Ovary (tissue), 10 donors: ENCODE measurements at regions of chr1 and their contacts with region 1.

Region 1: GRCh38 chr1:43073490-43074230 is 98.4 kb downstream of the EBNA1BP2 start:
- DNase-seq: peak; percentile 61 to 80 (median 71)
- H3K4me3 ChIP-seq: no peak overlapping the region
- H3K27ac ChIP-seq: no peak overlapping the region
- H3K4me1 ChIP-seq: peaks cover 2% of the 10 kb centered on the region
- H3K27me3 ChIP-seq: no peaks in the 10 kb centered on the region
- CTCF ChIP-seq: peak; percentile 67 to 91 (median 87)
- EP300 ChIP-seq: no peak
- POLR2A ChIP-seq: no peak

Region 2: DNA sequence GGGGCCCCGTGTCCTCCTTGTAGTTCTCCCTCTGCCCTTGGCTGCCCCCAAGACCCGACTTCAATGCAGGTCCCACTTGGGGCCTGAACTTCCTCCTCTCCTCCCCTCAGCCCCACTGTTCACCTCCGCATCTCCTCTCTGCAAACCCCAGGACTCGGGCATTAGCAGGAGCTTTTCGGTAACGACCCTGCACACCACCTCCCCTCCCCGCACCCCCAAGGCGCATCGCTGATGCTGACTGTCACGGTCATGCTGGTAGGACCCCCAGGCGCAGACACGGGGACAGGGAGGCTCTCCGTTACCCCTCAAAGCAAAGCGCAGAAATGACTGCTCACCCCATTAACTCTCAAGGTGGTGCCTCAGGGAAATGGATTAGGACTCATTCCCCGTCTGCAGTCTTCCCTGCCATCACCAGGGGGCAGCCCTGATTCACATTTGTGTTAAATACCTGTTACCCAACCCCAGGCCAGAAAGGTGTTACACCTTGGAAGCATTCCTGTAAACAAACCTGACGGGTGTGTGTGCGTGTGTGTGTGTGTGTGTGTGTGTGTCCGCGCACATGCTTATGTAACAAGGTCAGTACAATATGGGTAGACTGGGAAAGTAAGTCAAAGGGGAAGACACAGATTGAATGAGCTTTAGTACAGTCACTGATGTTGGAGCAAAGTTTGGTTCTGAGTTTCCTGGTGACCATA is 926.9 kb before region 1 on chr1:
- intact Hi-C with region 1: loop called in 1 of 4 experiments (anchors 10 kb)
- DNase-seq: peak; percentile 31 to 74 (median 66)
- H3K4me3 ChIP-seq: no peak overlapping the region
- H3K27ac ChIP-seq: no peak overlapping the region
- H3K4me1 ChIP-seq: no peaks in the 10 kb centered on the region
- H3K27me3 ChIP-seq: no peaks in the 10 kb centered on the region
- CTCF ChIP-seq: peak in 2 of 3 donors; percentile 59 to 67
- EP300 ChIP-seq: no peak
- POLR2A ChIP-seq: no peak

Region 3: GRCh38 chr1:42576935-42577334 is 496.7 kb before region 1 on chr1:
- intact Hi-C with region 1: loop called in 1 of 4 experiments (anchors 5 kb)
- DNase-seq: no peak
- H3K4me3 ChIP-seq: no peak overlapping the region
- H3K27ac ChIP-seq: no peak overlapping the region
- H3K4me1 ChIP-seq: no peaks in the 10 kb centered on the region
- H3K27me3 ChIP-seq: no peaks in the 10 kb centered on the region
- CTCF ChIP-seq: no peak
- EP300 ChIP-seq: no peak
- POLR2A ChIP-seq: no peak

Region 4: DNA sequence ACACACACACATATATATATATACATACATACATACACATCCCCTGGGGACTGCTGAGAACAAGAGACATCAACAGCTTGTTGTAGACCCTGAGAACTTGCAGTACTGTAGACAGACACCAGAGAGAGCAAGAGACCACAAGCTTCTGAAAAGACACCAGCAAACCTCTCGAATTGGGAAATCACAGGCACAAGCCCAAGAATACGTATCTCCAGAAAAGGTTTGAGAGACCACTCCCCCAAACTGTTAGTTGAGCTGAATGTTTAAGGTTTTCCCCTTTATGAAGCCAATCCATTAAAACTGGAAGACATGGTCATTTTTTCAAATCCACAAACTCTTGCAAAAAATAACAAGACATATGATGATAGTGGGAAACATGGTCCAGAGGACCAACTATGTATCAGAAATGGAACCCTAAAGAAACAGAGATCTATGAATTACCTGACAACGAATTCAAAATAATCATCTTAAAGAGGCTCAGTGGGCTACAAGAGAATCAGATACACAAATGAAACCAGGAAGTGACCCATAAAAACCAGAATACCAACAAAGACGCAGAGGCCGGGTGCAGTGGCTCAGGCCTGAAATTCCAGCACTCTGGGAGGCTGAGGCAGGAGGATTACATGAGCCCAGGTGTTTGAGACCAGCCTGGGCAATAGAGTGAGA is 160.1 kb before region 1 on chr1:
- intact Hi-C with region 1: loop called in 2 of 4 experiments (anchors 5 kb)
- DNase-seq: peak in 1 of 5 donors; percentile 62
- H3K4me3 ChIP-seq: no peak overlapping the region
- H3K27ac ChIP-seq: no peak overlapping the region
- H3K4me1 ChIP-seq: no peaks in the 10 kb centered on the region
- H3K27me3 ChIP-seq: no peaks in the 10 kb centered on the region
- CTCF ChIP-seq: peak in 2 of 3 donors; percentile 47 to 54
- EP300 ChIP-seq: no peak
- POLR2A ChIP-seq: no peak

Region 5: DNA sequence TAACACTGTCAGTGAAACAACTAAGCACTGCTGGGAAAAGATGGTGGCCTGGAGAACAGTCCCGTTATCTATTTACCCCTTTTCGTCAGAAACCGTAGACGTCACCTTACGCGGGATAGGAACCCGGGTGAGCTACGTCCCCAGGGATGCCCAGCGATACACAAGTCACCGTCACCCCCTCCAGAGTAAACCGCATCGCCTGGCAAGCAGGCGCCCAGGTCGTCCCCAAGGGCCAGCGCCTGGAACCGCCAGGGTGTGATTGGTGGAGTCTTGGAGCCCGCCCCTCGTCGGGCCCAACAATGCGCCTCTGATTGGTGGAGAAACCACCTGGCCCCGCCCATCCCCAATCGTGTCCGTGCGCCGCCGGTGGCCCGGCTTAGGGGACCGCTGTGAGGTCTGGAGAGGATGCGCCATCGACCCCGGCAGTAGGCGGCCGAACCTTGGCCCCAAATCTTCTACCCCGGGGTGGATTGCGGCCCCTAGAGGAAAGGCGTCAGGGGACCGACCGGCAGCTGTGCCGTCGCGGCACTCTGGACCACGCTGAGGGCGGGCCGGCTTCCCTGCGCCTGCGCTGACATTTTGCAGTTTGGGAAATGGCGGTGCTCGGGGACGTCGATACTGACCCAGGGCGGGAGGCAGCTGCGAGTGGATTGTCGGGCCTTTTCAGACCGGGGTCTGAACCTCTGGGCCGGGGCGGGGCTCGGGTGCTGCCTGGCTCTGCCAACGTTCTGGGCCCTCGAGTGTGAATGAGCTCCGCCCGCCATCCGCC is 149.4 kb before region 1 on chr1:
- intact Hi-C with region 1: loop called in 2 of 4 experiments (anchors 5 kb)
- DNase-seq: peak; percentile 93 to 95 (median 94)
- H3K4me3 ChIP-seq: peak overlapping the region; percentile 63
- H3K27ac ChIP-seq: peak overlapping the region; percentile 77 to 80
- H3K4me1 ChIP-seq: peaks cover 2% of the 10 kb centered on the region
- H3K27me3 ChIP-seq: no peaks in the 10 kb centered on the region
- CTCF ChIP-seq: peak in 1 of 3 donors; percentile 14
- EP300 ChIP-seq: no peak
- POLR2A ChIP-seq: peak; percentile 79